Activated CD8-positive, alpha-beta T cell treated with anti-CD3 and anti-CD28 coated beads for 36 hours (primary cell): ENCODE measurements at regions of chr11 and their contacts with region 1.

Region 1: GRCh38 chr11:30561691-30562415 is 24.3 kb downstream of the MPPED2 start:
- DNase-seq: no peak
- ATAC-seq: no peak
- H3K4me3 Mint-ChIP-seq: no peak overlapping the region
- H3K27ac Mint-ChIP-seq: no peak overlapping the region
- H3K4me1 Mint-ChIP-seq: no peaks in the 10 kb centered on the region
- H3K27me3 Mint-ChIP-seq: peaks cover 3% of the 10 kb centered on the region
- CTCF ChIP-seq: no peak

Region 2: GRCh38 chr11:30478923-30479322 is 82.9 kb before region 1 on chr11:
- CTCF ChIA-PET with region 1: no interaction called
- POLR2A ChIA-PET with region 1: no interaction called
- intact Hi-C with region 1: no loop called
- DNase-seq: no peak
- ATAC-seq: no peak
- H3K4me3 Mint-ChIP-seq: no peak overlapping the region
- H3K27ac Mint-ChIP-seq: no peak overlapping the region
- H3K4me1 Mint-ChIP-seq: no peaks in the 10 kb centered on the region
- H3K27me3 Mint-ChIP-seq: peaks cover 8% of the 10 kb centered on the region
- CTCF ChIP-seq: no peak

Region 3: DNA sequence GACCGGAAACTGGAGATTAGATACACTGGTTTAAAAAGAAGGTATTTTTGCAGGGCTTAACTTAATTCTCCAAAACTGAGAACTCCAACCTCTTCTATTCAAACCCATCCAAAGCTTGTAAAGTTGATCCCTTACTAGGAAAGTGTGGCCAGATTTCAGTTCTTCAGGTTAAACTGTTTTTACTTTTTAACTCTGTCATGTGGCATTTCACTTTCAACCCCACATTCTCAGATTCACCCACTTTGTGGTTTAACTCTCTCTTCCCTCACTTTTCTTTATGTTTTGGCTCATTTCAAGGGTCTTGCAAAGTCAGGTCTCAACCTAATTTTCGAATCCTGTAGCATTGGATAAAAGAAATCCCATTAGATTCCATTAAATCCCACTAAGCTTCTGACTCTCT is 51.1 kb before region 1 on chr11:
- CTCF ChIA-PET with region 1: no interaction called
- POLR2A ChIA-PET with region 1: no interaction called
- intact Hi-C with region 1: loop called (anchors 10 kb)
- DNase-seq: no peak
- ATAC-seq: no peak
- H3K4me3 Mint-ChIP-seq: no peak overlapping the region
- H3K27ac Mint-ChIP-seq: no peak overlapping the region
- H3K4me1 Mint-ChIP-seq: peaks cover 16% of the 10 kb centered on the region
- H3K27me3 Mint-ChIP-seq: peaks cover 19% of the 10 kb centered on the region
- CTCF ChIP-seq: no peak

Region 4: DNA sequence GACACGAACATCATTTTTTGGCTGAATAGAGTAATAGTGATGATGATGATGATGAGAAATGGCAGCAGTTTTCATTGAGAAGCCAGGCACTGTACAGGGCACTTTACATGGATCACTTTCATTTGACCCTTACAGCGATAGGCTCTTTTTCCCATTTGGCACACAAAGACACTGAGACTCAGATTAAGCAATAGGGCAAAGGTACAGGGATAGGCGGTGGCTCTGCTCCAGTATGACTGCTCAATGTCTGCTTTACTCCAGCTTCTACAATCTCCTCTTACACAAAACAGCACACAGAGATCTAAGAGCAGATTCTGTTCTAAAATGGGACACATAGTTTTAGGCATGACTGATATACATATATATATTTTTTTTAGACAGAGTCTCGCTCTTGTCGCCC is 16.3 kb before region 1 on chr11:
- CTCF ChIA-PET with region 1: no interaction called
- POLR2A ChIA-PET with region 1: no interaction called
- intact Hi-C with region 1: no loop called
- DNase-seq: no peak
- ATAC-seq: no peak
- H3K4me3 Mint-ChIP-seq: no peak overlapping the region
- H3K27ac Mint-ChIP-seq: no peak overlapping the region
- H3K4me1 Mint-ChIP-seq: no peaks in the 10 kb centered on the region
- H3K27me3 Mint-ChIP-seq: no peaks in the 10 kb centered on the region
- CTCF ChIP-seq: no peak

Region 5: DNA sequence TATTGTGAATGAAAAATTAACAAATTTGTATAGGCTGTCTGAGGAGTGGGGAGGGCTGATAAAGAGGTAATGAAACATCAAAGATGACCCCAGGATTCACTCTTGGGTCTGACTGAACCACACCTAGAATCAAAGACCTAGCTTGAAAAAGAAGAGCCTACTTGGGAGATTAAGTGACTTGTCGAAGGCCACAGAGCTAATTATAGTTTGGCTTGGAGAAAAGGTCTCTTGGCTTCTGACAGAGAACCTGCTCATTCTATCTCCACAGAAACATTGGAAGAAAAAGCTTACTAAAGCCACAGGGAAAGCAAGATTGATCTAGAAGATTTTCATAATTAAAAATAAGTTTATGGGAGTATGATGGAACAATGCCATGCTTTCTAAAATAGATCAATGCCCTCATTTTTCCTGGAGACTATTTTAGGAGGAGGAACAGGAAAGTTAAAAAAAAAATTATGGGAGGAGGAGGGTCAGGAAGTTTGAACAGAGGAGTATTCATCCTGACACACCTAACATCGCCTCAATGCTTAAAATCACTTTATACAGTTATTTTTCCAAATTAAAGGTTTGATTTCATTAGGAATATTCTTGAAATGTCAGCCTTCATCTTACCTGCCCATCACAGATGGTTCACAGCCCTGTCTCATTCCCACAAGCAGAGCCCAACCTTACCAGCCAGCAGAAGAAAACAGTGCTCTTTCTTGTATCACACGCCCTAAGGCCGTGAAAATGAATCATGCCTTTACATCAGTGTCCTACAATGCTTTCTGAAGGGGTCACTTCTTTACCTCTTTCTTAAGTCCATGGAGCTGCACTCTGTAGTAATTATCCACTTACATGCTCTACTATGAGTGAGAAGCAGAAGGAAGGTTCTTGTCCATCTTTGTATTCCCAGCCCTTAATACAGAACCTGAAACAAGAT is 255.4 kb after region 1 on chr11:
- CTCF ChIA-PET with region 1: no interaction called
- POLR2A ChIA-PET with region 1: no interaction called
- intact Hi-C with region 1: no loop called
- DNase-seq: no peak
- ATAC-seq: no peak
- H3K4me3 Mint-ChIP-seq: no peak overlapping the region
- H3K27ac Mint-ChIP-seq: no peak overlapping the region
- H3K4me1 Mint-ChIP-seq: no peaks in the 10 kb centered on the region
- H3K27me3 Mint-ChIP-seq: peaks cover 1% of the 10 kb centered on the region
- CTCF ChIP-seq: no peak